ENCODE measurements at regions of chr7 and their contacts with region 1.

Region 1: DNA sequence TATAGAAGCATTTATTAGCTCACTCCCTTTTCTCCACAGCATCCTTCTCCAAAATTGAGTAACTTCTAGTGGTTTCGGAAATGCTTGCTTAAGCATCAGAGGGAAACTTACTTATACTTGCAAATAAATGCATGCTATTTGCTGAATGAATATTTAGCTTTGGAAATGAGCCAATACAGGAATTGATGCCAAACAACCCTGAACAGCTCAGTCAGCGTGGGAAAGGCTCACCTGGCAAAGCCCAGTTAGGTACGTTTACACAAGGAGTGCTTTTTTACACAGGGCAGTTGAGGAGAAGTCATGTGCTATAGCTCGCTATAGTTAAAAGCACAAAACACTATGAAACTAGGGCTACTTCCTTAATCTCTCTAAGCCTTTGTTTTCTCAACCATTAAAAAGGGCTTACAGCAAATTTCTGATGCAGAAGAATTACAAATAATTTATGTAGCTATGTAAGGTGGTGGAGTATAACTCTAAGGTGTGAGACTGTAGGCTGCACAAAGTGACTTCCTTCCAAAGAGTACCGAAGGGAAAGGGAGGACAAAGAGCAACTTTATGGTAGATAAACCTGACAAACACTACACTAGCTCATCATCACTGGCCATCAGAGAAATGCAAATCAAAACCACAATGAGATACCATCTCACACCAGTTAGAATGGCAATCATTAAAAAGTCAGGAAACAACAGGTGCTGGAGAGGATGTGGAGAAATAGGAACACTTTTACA is 498.2 kb downstream of the PHTF2 start:
- DNase-seq: no peak
- H3K4me3 ChIP-seq: no peak overlapping the region
- H3K27ac ChIP-seq: no peak overlapping the region
- H3K4me1 ChIP-seq: no peaks in the 10 kb centered on the region
- H3K27me3 ChIP-seq: no peaks in the 10 kb centered on the region
- CTCF ChIP-seq: no peak
- POLR2A ChIP-seq: no peak

Region 2: DNA sequence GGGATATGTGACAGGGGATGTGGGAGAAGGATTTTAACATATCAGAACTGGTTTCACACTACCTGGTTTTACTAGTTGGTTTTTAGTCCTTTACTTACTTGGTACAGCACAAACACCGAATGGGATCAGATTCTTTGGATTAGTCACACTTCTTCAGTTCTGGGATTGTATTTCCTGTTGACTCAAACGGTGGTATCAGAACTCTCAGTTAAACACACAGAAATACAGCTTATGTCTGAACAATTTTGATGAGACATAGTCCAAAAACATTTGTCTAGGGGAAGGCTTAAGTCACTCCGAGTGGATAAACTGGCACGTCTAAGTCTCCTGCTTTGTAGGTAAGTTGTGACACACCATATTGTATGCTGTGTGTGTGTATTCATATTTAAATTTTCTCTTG is 17.8 kb before region 1 on chr7:
- intact Hi-C with region 1: no loop called
- DNase-seq: no peak
- H3K4me3 ChIP-seq: no peak overlapping the region
- H3K27ac ChIP-seq: no peak overlapping the region
- H3K4me1 ChIP-seq: no peaks in the 10 kb centered on the region
- H3K27me3 ChIP-seq: no peaks in the 10 kb centered on the region
- CTCF ChIP-seq: no peak
- POLR2A ChIP-seq: no peak

Region 3: GRCh38 chr7:78345979-78346378 is 49.2 kb after region 1 on chr7:
- intact Hi-C with region 1: loop called (anchors 5 kb)
- DNase-seq: no peak
- H3K4me3 ChIP-seq: no peak overlapping the region
- H3K27ac ChIP-seq: no peak overlapping the region
- H3K4me1 ChIP-seq: no peaks in the 10 kb centered on the region
- H3K27me3 ChIP-seq: no peaks in the 10 kb centered on the region
- CTCF ChIP-seq: no peak
- POLR2A ChIP-seq: no peak